Panc1 (cell line): ENCODE measurements at regions of chr4 and their contacts with region 1.

Region 1: GRCh38 chr4:137531986-137532868 is at the start of gene PCDH18:
- DNase-seq: no peak
- ATAC-seq: peak; percentile 89
- H3K4me3 ChIP-seq: peak within 1 kb of the TSS; percentile 72 to 76
- H3K27ac ChIP-seq: peak within 1 kb of the TSS; percentile 87
- H3K4me1 ChIP-seq: peaks cover 3% of the 10 kb centered on the region
- H3K27me3 ChIP-seq: no peaks in the 10 kb centered on the region
- CTCF ChIP-seq: no peak
- total RNA-seq, gene PCDH18: 10.8 TPM

Region 2: GRCh38 chr4:136768926-136769275 is 763.3 kb before region 1 on chr4:
- CTCF ChIA-PET with region 1: no interaction called
- POLR2A ChIA-PET with region 1: no interaction called
- in situ Hi-C with region 1: no loop called
- intact Hi-C with region 1: no loop called
- DNase-seq: no peak
- ATAC-seq: no peak
- H3K4me3 ChIP-seq: no peak overlapping the region
- H3K27ac ChIP-seq: no peak overlapping the region
- H3K4me1 ChIP-seq: no peaks in the 10 kb centered on the region
- H3K27me3 ChIP-seq: no peaks in the 10 kb centered on the region
- CTCF ChIP-seq: no peak

Region 3: GRCh38 chr4:137124278-137124932 is 407.8 kb before region 1 on chr4:
- CTCF ChIA-PET with region 1: interaction called, 4 read pairs
- POLR2A ChIA-PET with region 1: no interaction called
- in situ Hi-C with region 1: no loop called
- intact Hi-C with region 1: loop called (anchors 10 kb)
- DNase-seq: peak; percentile 10
- ATAC-seq: peak; percentile 95
- H3K4me3 ChIP-seq: peak overlapping the region in 1 of 2 experiments; percentile 5; a peak in 1 of 4 replicates
- H3K27ac ChIP-seq: peak overlapping the region; percentile 39; the same call in 1 of the 2 replicates
- H3K4me1 ChIP-seq: no peaks in the 10 kb centered on the region; the same call in 1 of the 2 replicates
- H3K27me3 ChIP-seq: no peaks in the 10 kb centered on the region
- CTCF ChIP-seq: peak; percentile 57; the same call in 1 of the 2 replicates